Activated T-helper 1 cell treated with anti-CD3 and anti-CD28 coated beads, Interleukin-12 subunit alpha, Interleukin-12 subunit beta, Interleukin-2, Interleukin-4 antibody, amounts not matched to agents 30 ng/mL and 10 ng/mL and 1 ng/mL, durations not matched to agents 14 hours and 24 hours and 36 hours (primary cell): ENCODE measurements at regions of chr14 and their contacts with region 1.

Region 1: DNA sequence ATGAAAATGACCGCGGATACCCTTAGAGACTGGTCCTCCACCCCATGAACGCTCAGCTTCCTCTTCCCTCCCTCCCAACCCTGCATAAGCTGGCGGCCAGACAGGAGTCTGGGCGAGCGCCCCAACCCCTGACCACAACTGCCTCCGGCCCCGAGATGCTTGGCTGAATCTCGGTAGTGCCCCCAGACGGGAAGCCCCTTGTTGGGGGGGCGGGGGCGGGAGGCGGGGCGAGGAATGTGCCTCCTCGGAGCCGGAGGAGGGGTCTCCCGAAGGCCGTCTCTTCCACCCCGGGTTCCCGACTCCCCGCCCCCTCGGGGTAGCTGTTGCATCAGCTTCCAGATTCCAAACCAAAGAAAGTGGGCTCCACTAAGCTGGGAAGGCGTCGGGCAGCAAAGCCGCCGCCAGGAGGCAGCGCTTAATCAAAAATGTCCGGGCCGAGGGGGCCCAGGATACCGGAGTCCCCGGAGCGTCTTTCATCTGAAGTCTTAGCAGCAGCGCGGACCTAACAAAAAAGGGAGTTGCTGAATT is 7.1 kb upstream of the MRPL52 start:
- DNase-seq: peak; percentile 52
- H3K4me3 Mint-ChIP-seq: peak overlapping the region; percentile 60
- H3K27ac Mint-ChIP-seq: no peak overlapping the region
- H3K4me1 Mint-ChIP-seq: peaks cover 35% of the 10 kb centered on the region
- H3K27me3 Mint-ChIP-seq: peaks cover 8% of the 10 kb centered on the region

Region 2: GRCh38 chr14:22400655-22401259 is 421.9 kb before region 1 on chr14:
- intact Hi-C with region 1: no loop called
- DNase-seq: no peak
- H3K4me3 Mint-ChIP-seq: no peak overlapping the region
- H3K27ac Mint-ChIP-seq: no peak overlapping the region
- H3K4me1 Mint-ChIP-seq: no peaks in the 10 kb centered on the region
- H3K27me3 Mint-ChIP-seq: no peaks in the 10 kb centered on the region

Region 3: DNA sequence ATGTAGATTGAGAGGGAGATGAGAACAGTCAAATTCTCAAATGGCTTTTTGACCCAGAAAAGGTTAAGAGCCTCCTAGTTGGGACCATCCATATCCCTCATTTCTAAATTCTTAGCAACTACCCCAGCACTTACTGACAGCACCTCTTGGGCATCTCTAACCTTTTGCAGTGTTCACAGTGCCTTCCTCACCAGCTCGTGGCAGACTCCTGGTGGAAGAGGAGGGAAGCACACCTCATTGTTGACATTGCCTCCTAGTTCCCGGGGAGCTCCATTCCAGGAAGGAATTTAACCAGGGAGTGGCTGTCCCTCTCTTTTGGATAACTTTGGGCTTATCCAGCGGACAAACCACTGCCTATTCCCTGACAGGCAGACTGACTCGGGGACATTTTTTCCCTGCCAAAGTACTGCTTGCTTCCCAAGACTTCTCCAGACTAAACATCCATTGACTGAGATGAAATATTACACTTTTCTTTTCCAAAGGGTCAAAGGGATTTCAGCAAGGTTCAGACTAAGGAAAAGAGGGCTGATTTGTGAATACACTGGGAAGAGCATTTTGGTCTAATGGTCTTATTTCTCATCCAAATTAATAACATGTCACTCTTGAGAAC is 169.5 kb before region 1 on chr14:
- intact Hi-C with region 1: loop called (anchors 10 kb)
- DNase-seq: peak; percentile 25
- H3K4me3 Mint-ChIP-seq: no peak overlapping the region
- H3K27ac Mint-ChIP-seq: no peak overlapping the region
- H3K4me1 Mint-ChIP-seq: no peaks in the 10 kb centered on the region
- H3K27me3 Mint-ChIP-seq: no peaks in the 10 kb centered on the region

Region 4: DNA sequence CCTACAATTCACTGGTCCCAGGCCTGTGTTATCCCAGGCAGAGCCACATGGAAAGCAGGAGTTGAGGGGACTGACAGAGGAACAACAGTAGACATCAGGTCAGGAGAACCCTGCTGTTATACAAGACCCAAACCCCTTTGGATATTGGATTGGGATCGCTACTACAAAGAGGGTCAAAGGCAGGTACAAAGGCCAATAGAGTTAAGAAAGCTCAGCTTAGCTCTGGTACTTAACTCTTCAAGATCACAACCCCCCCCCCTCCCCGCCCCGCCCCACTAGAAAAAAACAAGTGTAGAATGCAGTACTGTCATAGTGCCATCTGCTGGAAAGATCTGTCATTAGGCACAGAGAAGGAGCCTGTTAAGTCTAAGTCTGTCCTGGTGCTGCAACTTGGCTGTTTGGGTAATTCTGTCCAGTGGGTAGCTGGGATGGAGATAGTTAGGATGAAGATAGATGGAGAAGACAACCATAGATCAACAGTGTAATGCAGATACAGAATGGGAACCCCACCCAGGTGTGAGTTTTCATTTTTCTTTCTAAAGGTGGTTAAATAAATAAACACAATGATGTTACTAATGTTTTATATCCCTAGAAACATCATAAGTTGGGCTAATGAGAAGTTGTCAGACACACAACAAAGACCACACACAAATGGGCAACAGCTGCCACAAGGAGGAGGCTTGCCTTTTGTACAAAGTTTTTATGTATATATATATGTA is 77.6 kb after region 1 on chr14:
- intact Hi-C with region 1: loop called (anchors 1 kb)
- DNase-seq: peak; percentile 30
- H3K4me3 Mint-ChIP-seq: no peak overlapping the region
- H3K27ac Mint-ChIP-seq: peak overlapping the region; percentile 57
- H3K4me1 Mint-ChIP-seq: peaks cover 19% of the 10 kb centered on the region
- H3K27me3 Mint-ChIP-seq: no peaks in the 10 kb centered on the region